ENCODE measurements at regions of chr21 and their contacts with region 1.

Region 1: GRCh38 chr21:28712411-28712810 is 280.3 kb downstream of the LTN1 start:
- DNase-seq: no peak
- ATAC-seq: no peak
- H3K4me3 ChIP-seq: no peak overlapping the region
- H3K27ac ChIP-seq: no peak overlapping the region
- H3K4me1 ChIP-seq: no peaks in the 10 kb centered on the region
- H3K27me3 ChIP-seq: no peaks in the 10 kb centered on the region
- CTCF ChIP-seq: no peak
- EP300 ChIP-seq: no peak
- POLR2A ChIP-seq: no peak
- RAD21 ChIP-seq: no peak

Region 2: GRCh38 chr21:28308516-28308915 is 403.9 kb before region 1 on chr21:
- CTCF ChIA-PET with region 1: no interaction called
- POLR2A ChIA-PET with region 1: no interaction called
- in situ Hi-C with region 1: no loop called
- intact Hi-C with region 1: no loop called
- DNase-seq: no peak
- ATAC-seq: no peak
- H3K4me3 ChIP-seq: no peak overlapping the region
- H3K27ac ChIP-seq: no peak overlapping the region
- H3K4me1 ChIP-seq: no peaks in the 10 kb centered on the region
- H3K27me3 ChIP-seq: no peaks in the 10 kb centered on the region
- CTCF ChIP-seq: no peak
- EP300 ChIP-seq: no peak
- POLR2A ChIP-seq: no peak
- RAD21 ChIP-seq: no peak

Region 3: DNA sequence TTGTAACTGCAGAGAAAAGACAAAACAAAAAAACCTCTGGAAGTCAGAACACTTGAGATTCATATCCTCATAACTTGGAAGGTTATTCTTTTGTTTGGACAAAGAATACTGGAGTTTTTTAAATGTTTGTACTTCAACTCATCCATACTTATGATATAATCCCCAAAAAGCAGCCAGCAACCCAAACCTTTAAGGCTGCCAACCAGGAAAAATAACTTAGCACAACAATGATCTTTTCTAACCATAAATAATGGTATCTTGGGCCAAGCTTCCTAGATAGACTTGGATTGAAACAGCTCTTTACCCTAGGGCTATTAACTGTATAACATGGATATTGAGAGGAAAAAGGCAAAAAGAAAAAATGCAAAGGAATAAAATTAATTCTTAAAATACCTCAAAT is 54.8 kb before region 1 on chr21:
- CTCF ChIA-PET with region 1: no interaction called
- POLR2A ChIA-PET with region 1: no interaction called
- in situ Hi-C with region 1: no loop called
- intact Hi-C with region 1: loop called (anchors 1 kb)
- DNase-seq: no peak
- ATAC-seq: no peak
- H3K4me3 ChIP-seq: no peak overlapping the region
- H3K27ac ChIP-seq: no peak overlapping the region
- H3K4me1 ChIP-seq: no peaks in the 10 kb centered on the region
- H3K27me3 ChIP-seq: no peaks in the 10 kb centered on the region; a peak in 1 of 5 replicates
- CTCF ChIP-seq: no peak
- EP300 ChIP-seq: no peak
- POLR2A ChIP-seq: no peak
- RAD21 ChIP-seq: no peak

Measured in HepG2 (cell line).